ENCODE measurements at regions of chr19 and their contacts with region 1.

Region 1: GRCh38 chr19:8580710-8581281 is 3.6 kb upstream of the MYO1F start:
- DNase-seq: peak; percentile 78 to 94 (median 86)
- ATAC-seq: peak; percentile 69
- H3K4me3 ChIP-seq: no peak overlapping the region
- H3K4me3 Mint-ChIP-seq: no peak overlapping the region
- H3K27ac ChIP-seq: no peak overlapping the region
- H3K27ac Mint-ChIP-seq: no peak overlapping the region
- H3K4me1 ChIP-seq: peaks cover 54% of the 10 kb centered on the region
- H3K4me1 Mint-ChIP-seq: peaks cover 30% of the 10 kb centered on the region
- H3K27me3 ChIP-seq: no peaks in the 10 kb centered on the region
- H3K27me3 Mint-ChIP-seq: no peaks in the 10 kb centered on the region
- CTCF ChIP-seq: peak; percentile 100

Region 2: DNA sequence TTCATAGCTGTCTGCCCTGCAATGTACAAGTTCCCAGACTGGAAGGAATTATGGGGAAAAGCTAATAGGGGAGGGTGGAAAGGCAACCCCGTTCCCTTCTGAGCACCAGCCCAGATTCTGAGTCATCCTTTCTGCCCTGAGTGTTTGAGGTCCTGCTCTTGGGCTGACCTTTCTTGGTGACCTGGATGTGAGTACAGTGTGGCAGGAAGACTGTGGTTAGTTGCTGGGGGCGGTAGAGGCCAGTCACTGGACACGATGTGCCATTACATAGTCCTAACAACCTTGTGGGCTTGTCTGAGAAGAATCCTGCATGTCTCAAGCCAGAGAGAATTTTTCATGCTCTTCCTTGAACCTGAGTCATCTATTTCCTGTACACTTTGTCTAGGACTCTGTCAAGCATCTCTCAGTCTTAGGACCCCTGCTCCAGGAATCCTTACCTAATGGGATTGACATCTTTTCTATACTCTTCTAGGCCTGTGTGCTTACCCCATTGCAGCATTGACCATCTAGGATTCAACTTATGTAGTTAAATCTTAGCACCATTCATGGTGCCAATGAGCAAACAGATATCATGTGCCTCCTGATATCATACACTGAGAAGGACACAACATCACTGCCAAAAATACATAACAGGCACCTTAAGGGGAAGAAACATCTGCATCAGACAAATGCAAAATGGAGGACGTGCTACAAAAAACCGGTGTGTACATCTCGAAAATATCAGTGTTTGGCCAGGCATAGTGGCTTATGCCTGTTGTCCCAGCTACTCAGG is 225.0 kb before region 1 on chr19:
- CTCF ChIA-PET with region 1: interaction called, 3 read pairs
- POLR2A ChIA-PET with region 1: interaction called, 4 read pairs
- intact Hi-C with region 1: loop called (anchors 2 to 10 kb)
- DNase-seq: no peak
- ATAC-seq: no peak
- H3K4me3 ChIP-seq: no peak overlapping the region
- H3K4me3 Mint-ChIP-seq: no peak overlapping the region
- H3K27ac ChIP-seq: no peak overlapping the region
- H3K27ac Mint-ChIP-seq: no peak overlapping the region
- H3K4me1 ChIP-seq: peaks cover 6% of the 10 kb centered on the region
- H3K4me1 Mint-ChIP-seq: peaks cover 4% of the 10 kb centered on the region
- H3K27me3 ChIP-seq: peaks cover 5 to 14% of the 10 kb centered on the region in 2 experiments
- H3K27me3 Mint-ChIP-seq: peaks cover 14% of the 10 kb centered on the region
- CTCF ChIP-seq: no peak

Region 3: GRCh38 chr19:8487137-8487851 is 93.5 kb before region 1 on chr19:
- CTCF ChIA-PET with region 1: interaction called, 22 read pairs
- POLR2A ChIA-PET with region 1: interaction called, 12 read pairs
- intact Hi-C with region 1: loop called (anchors 1 kb)
- DNase-seq: peak; percentile 46 to 81 (median 62)
- ATAC-seq: peak; percentile 89
- H3K4me3 ChIP-seq: no peak overlapping the region
- H3K4me3 Mint-ChIP-seq: peak overlapping the region; percentile 59
- H3K27ac ChIP-seq: peak overlapping the region; percentile 57 to 64
- H3K27ac Mint-ChIP-seq: peak overlapping the region; percentile 85
- H3K4me1 ChIP-seq: peaks cover 38% of the 10 kb centered on the region
- H3K4me1 Mint-ChIP-seq: peaks cover 46% of the 10 kb centered on the region
- H3K27me3 ChIP-seq: no peaks in the 10 kb centered on the region
- H3K27me3 Mint-ChIP-seq: no peaks in the 10 kb centered on the region
- CTCF ChIP-seq: peak; percentile 60

Region 4: DNA sequence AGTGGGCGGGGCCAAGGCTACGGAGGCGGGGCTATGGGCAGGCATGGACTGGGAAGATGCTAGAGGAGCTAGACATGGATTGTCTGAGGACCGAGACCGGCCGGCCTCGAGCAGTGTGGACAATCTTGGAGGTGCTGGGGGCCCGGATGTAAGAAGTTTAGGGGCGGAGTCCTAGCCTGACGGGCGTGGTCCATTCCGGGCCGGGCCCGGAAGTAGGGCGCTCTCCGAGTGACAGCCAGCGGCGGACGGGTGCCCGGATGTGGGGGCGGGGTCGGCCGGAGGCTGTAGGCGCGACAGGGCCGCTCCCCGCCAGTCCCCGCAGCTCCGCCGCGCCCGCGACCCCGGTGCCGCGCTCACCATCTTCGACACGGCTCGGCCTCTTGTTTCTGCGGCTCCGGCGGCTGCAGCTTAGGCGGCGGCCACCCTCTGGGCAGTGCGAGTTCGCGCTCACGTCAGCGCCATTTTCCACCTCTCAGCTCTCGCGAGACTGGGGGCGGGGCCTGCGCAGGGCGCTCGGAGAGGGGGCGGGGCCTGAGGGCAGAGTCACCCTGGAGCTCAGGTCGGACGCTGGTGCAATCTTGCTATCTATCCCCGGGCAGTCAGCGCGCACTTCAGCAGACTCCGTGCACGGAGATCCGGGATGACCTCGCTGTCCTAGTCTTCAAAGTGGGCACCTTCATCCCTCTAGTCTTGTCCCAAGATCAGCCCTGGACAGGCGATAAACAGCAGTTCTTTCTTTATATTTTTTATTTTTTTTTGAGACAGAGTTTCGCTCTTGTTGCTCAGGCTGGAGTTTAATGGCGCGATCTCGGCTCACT is 66.9 kb before region 1 on chr19 and contains the start of gene ZNF414:
- CTCF ChIA-PET with region 1: interaction called, 41 read pairs
- POLR2A ChIA-PET with region 1: interaction called, 185 read pairs
- intact Hi-C with region 1: loop called (anchors 2 kb)
- DNase-seq: peak; percentile 91 to 99 (median 97)
- ATAC-seq: peak; percentile 68
- H3K4me3 ChIP-seq: peak within 1 kb of the TSS; percentile 51
- H3K4me3 Mint-ChIP-seq: peak within 1 kb of the TSS; percentile 91
- H3K27ac ChIP-seq: peak within 1 kb of the TSS; percentile 84 to 97
- H3K27ac Mint-ChIP-seq: peak within 1 kb of the TSS; percentile 100
- H3K4me1 ChIP-seq: peaks cover 68% of the 10 kb centered on the region
- H3K4me1 Mint-ChIP-seq: peaks cover 61% of the 10 kb centered on the region
- H3K27me3 ChIP-seq: no peaks in the 10 kb centered on the region
- H3K27me3 Mint-ChIP-seq: no peaks in the 10 kb centered on the region
- CTCF ChIP-seq: no peak
- total RNA-seq, gene ZNF414: 36.3 to 38.0 TPM

Region 5: DNA sequence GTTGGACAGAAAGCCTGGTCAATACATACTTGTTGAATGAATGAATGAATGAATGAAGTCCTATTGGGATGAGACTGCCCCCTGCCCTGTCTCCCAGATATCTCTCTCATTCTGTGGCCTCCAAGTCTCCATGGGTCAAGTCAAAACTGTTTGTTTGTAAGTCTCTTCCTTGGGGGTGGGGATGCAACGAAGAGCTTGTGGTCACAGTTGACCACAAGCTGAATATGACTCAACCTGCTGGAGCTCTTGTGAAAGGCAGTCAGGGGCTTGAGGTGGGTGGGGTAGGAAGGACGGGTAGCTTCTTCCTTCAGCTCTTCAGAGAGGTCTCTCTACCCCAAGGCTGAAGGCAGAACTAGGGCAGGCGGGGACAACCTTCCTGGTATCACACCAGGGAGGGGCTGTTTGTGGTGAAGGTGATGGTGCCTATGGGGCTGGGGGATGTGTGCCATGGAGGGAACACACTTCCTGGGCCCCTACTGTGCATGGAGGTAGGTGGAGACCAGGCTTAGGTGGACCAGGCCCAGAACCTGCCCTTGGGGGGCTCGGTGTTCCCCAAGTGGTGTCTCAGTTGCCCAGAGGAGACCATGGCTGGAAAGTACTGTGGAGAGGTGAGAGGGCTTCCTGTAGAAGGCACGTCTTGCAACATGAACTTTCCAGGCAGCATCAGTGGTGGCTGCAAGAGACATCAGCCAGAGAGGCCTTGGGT is 11.6 kb before region 1 on chr19:
- CTCF ChIA-PET with region 1: interaction called, 46 read pairs
- POLR2A ChIA-PET with region 1: interaction called, 36 read pairs
- intact Hi-C with region 1: no loop called
- DNase-seq: peak in 13 of 14 experiments; percentile 51 to 91 (median 64)
- ATAC-seq: peak; percentile 75
- H3K4me3 ChIP-seq: peak overlapping the region; percentile 32
- H3K4me3 Mint-ChIP-seq: peak overlapping the region; percentile 76
- H3K27ac ChIP-seq: peak overlapping the region; percentile 59 to 79
- H3K27ac Mint-ChIP-seq: peak overlapping the region; percentile 95
- H3K4me1 ChIP-seq: peaks cover 100% of the 10 kb centered on the region
- H3K4me1 Mint-ChIP-seq: peaks cover 63% of the 10 kb centered on the region
- H3K27me3 ChIP-seq: no peaks in the 10 kb centered on the region
- H3K27me3 Mint-ChIP-seq: no peaks in the 10 kb centered on the region
- CTCF ChIP-seq: no peak

Region 6: DNA sequence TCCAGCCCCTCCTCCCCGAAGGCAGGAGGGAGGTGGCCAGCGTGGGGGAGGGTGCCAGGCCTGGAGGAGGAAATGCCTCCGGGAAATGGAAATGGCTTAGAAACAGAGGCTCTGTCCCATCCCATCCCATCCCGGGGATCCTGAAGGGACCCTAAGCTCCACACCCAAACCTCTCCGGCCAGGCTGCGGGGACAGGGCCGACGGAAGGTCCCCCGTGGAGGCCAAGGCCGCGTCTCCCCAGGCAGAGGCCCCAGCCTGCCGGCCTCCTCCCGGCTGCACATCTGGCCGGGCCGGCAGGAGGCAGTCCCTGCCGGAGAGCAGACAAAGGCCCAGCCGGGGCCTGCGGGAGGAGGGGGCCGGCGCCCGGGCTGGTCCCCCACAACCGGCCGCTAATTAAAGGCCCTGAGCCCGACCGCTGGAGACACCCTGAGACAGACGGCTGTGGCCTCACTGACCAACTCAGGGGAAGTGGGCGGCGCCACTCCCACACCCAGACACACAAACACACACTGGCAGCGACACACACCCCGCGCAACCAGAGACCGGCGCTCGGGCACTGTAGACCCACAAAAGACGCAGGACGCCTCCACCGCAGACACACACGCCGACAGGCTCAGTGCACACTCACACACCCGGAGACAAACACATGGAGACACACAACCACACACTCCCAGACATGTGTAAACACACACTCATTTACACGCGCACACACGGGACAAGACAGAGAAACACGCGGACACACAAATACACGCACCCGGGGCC is 28.7 kb after region 1 on chr19:
- CTCF ChIA-PET with region 1: interaction called, 14 read pairs
- POLR2A ChIA-PET with region 1: no interaction called
- intact Hi-C with region 1: loop called in 1 of 2 experiments (anchors 5 kb)
- DNase-seq: peak in 7 of 14 experiments; percentile 16 to 52 (median 26)
- ATAC-seq: peak; percentile 16
- H3K4me3 ChIP-seq: peak overlapping the region; percentile 75
- H3K4me3 Mint-ChIP-seq: peak overlapping the region; percentile 93
- H3K27ac ChIP-seq: no peak overlapping the region
- H3K27ac Mint-ChIP-seq: peak overlapping the region; percentile 73
- H3K4me1 ChIP-seq: peaks cover 34% of the 10 kb centered on the region
- H3K4me1 Mint-ChIP-seq: peaks cover 47% of the 10 kb centered on the region
- H3K27me3 ChIP-seq: no peaks in the 10 kb centered on the region
- H3K27me3 Mint-ChIP-seq: no peaks in the 10 kb centered on the region
- CTCF ChIP-seq: no peak

Region 7: DNA sequence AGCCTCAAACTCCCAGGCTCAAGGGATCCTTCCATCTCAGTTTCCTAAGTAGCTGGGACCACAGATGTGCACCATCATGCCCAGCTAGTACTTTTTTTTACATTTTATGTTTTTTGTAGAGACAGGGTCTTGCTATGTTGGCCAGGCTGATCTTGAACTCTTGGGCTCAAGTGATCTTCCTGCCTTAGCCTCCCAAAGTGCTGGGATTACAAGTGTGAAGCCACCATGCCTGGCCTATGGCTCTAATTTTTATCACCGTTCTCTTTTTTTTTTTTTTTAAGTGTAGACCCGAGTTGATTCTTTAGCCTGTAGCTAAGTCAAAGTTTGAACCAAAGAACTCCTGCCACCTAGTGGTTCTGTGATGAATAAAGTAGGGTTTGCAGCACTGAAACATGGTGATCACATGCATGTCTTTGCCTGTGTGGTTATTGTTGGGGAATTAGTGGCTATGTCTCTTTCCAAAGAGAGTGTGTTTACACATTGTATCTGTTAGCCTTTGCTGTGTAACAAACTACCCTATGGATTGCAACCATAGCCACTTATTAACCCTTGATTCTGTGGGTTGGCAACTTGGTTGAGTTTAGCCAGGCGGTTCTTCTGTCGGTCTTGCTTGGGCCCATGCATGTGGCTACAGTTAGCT is 61.2 kb after region 1 on chr19:
- CTCF ChIA-PET with region 1: interaction called, 21 read pairs
- POLR2A ChIA-PET with region 1: interaction called, 6 read pairs
- intact Hi-C with region 1: loop called (anchors 1 kb)
- DNase-seq: peak in 4 of 14 experiments; percentile 34 to 72 (median 65)
- ATAC-seq: peak; percentile 68
- H3K4me3 ChIP-seq: no peak overlapping the region
- H3K4me3 Mint-ChIP-seq: no peak overlapping the region
- H3K27ac ChIP-seq: no peak overlapping the region
- H3K27ac Mint-ChIP-seq: no peak overlapping the region
- H3K4me1 ChIP-seq: peaks cover 11% of the 10 kb centered on the region
- H3K4me1 Mint-ChIP-seq: no peaks in the 10 kb centered on the region
- H3K27me3 ChIP-seq: peaks cover 4 to 7% of the 10 kb centered on the region in 2 experiments
- H3K27me3 Mint-ChIP-seq: peaks cover 39% of the 10 kb centered on the region
- CTCF ChIP-seq: peak; percentile 69

Region 8: GRCh38 chr19:8806661-8807060 is 225.9 kb after region 1 on chr19:
- CTCF ChIA-PET with region 1: no interaction called
- POLR2A ChIA-PET with region 1: no interaction called
- intact Hi-C with region 1: no loop called
- DNase-seq: no peak
- ATAC-seq: no peak
- H3K4me3 ChIP-seq: no peak overlapping the region
- H3K4me3 Mint-ChIP-seq: no peak overlapping the region
- H3K27ac ChIP-seq: no peak overlapping the region
- H3K27ac Mint-ChIP-seq: no peak overlapping the region
- H3K4me1 ChIP-seq: no peaks in the 10 kb centered on the region
- H3K4me1 Mint-ChIP-seq: no peaks in the 10 kb centered on the region
- H3K27me3 ChIP-seq: peaks cover 0 to 3% of the 10 kb centered on the region in 2 experiments
- H3K27me3 Mint-ChIP-seq: no peaks in the 10 kb centered on the region
- CTCF ChIP-seq: no peak